PC-9 (cell line): ENCODE measurements at regions of chr2 and their contacts with region 1.

Region 1: GRCh38 chr2:65656145-65656718 is 223.8 kb upstream of the SPRED2 start:
- DNase-seq: no peak
- H3K4me3 ChIP-seq: no peak overlapping the region
- H3K27ac ChIP-seq: no peak overlapping the region
- H3K4me1 ChIP-seq: no peaks in the 10 kb centered on the region
- H3K27me3 ChIP-seq: peaks cover 4% of the 10 kb centered on the region; the same call in 1 of the 2 replicates
- CTCF ChIP-seq: no peak

Region 2: DNA sequence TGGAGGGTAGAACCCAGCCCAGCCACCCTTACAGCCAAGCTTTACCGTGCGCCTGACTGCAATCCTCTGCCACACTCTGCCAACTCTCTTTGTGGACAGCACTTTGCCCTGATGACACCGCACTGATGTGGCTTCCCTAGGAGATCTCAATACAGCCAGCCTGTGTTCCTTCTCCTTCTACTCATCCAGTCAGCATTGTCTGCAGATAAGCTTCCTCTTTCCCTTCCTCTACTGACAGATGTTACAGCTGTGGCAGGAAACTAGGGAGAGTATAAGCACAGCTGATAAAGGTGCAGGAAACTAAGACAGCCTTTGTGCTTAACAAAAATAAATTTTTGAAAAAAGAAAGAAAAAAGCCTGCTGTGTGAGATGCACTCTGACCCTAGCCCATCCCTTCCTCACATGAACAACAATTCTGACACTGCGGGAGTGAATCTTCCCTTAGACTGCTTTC is 575.0 kb before region 1 on chr2:
- CTCF ChIA-PET with region 1: no interaction called
- POLR2A ChIA-PET with region 1: no interaction called
- intact Hi-C with region 1: no loop called
- DNase-seq: no peak
- H3K4me3 ChIP-seq: no peak overlapping the region
- H3K27ac ChIP-seq: no peak overlapping the region
- H3K4me1 ChIP-seq: no peaks in the 10 kb centered on the region
- H3K27me3 ChIP-seq: no peaks in the 10 kb centered on the region
- CTCF ChIP-seq: no peak

Region 3: DNA sequence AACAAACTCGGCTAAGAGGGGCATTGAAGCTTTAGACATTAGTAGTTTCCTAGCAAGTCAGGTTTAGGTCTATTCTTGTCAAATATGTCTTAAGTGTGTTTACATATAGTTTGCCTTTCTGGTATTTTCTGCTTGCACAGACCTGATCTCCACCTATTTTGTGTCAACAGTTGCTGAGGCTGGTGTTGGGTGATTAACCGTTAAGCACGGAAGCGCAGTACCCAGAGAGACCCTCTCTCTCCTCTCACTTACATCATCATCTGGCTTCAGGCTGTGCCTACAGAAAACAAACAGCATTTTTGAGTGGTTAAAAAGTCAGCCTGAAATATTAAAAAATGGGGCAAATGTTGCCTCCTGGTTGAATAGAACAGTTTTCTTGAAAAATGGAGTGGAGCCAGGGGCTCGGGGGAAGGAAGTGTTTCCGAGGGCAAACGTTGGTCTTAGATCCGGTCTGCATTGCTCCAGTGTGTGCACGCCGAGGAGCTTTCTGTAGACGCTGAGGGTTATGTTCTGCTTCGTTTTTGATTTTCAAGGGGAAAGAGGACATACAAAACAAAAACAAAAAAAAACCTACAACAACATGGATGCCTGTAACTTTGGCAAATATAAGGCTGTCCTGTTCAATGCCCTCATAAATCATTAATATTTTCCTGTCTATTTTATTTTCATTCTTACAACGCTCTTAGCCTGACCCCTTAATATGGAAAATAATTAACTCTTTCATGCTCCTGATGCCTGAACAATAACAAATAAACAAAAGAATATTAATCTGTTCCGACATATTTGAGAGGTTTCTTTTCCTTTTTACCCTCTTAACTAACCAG is 899.5 kb after region 1 on chr2:
- CTCF ChIA-PET with region 1: interaction called, 17 read pairs
- POLR2A ChIA-PET with region 1: no interaction called
- intact Hi-C with region 1: no loop called
- DNase-seq: no peak
- H3K4me3 ChIP-seq: no peak overlapping the region
- H3K27ac ChIP-seq: no peak overlapping the region
- H3K4me1 ChIP-seq: peaks cover 19% of the 10 kb centered on the region
- H3K27me3 ChIP-seq: no peaks in the 10 kb centered on the region
- CTCF ChIP-seq: no peak